Left lung (tissue), 14 donors: ENCODE measurements at regions of chr4 and their contacts with region 1.

Region 1: GRCh38 chr4:16205298-16206164 is 20.7 kb downstream of the TAPT1 start:
- DNase-seq: no peak
- ATAC-seq: peak; percentile 78
- H3K4me3 ChIP-seq: no peak overlapping the region
- H3K27ac ChIP-seq: no peak overlapping the region
- H3K4me1 ChIP-seq: peaks cover 0 to 45% of the 10 kb centered on the region in 2 donors
- H3K27me3 ChIP-seq: no peaks in the 10 kb centered on the region
- CTCF ChIP-seq: peak in 1 of 2 donors; percentile 43

Region 2: DNA sequence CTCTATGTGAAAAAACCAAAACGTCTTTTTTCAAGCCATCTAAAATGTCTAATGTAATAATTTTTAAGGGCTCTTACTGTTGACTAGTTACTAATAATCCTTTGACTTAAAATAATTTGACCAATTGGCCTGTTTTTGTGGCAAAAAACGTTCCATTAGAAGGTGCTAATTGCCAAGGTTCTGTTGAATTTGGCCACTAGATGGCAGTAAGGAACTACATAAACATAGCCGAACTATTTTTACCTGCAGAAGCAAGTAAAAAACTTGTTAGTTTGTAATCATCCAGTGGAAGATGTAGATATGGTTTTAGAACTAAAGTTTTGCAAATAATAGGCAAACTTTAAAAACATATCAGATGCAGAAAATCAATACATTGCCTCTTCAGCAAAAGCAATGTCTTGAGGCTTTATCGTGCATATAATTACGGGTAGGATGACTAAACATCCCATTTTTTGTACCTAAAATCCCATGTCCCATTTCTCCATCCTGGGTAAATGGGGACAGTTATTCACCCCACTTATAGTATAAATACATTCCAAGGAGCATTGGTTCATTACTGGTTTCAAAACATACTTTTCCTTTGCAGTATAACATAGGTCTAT is 179.3 kb before region 1 on chr4:
- intact Hi-C with region 1: loop called in 1 of 2 experiments (anchors 5 kb)
- DNase-seq: peak in 2 of 4 donors; percentile 42 to 65
- ATAC-seq: peak; percentile 75
- H3K4me3 ChIP-seq: no peak overlapping the region
- H3K27ac ChIP-seq: no peak overlapping the region
- H3K4me1 ChIP-seq: peaks cover 0 to 6% of the 10 kb centered on the region in 2 donors
- H3K27me3 ChIP-seq: no peaks in the 10 kb centered on the region
- CTCF ChIP-seq: peak; percentile 74 to 86